ENCODE measurements at regions of chr7 and their contacts with region 1.

Region 1: GRCh38 chr7:28037220-28038010 is 143.2 kb downstream of the JAZF1 start:
- DNase-seq: no peak
- H3K4me3 Mint-ChIP-seq: peak overlapping the region; percentile 34
- H3K27ac Mint-ChIP-seq: peak overlapping the region; percentile 70
- H3K4me1 Mint-ChIP-seq: peaks cover 31% of the 10 kb centered on the region
- H3K27me3 Mint-ChIP-seq: peaks cover 16% of the 10 kb centered on the region

Region 2: DNA sequence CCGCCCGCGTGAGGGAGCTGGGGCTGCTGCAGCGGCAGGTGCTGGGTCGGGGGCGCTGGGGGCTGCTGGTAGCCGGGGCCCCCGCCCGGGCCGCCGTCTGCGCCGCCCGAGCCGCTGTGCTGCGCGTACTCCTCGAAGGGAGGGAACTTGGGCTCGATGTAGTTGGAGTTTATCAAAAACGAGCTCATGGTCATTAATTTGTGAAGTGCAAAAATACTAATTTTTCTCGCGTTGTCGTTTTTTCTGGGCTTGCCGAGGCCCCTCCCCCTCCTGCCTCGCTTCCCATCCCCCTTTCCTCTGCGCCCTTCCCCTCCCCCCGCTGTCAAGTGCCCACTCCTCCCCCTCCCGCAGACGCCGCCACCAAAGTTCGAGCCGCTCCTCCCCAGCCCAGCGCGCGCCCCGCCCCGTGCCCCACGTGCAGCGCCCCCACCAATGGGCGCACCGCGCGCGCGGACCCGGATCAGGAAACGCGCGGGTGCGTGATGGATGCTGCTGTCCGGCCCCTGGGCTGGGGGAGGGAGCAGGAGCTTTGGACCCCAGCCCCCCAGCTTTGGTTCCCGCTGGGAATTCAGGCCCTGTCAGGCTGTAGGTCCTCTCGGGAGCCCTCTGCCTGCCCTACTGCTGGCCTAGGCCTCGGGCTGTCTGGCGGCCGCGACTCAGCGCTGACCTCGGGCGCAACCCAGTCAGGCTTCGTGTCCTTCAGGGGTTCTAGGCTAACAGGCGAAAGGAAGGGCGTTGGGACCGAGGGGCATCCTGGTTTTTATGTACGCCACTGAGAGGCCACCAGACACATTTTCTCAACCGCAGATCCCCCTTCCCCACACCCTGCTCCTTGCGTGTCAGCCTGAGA is 906.6 kb before region 1 on chr7 and contains the start of gene HOXA4:
- intact Hi-C with region 1: loop called (anchors 1 kb)
- DNase-seq: peak; percentile 67
- H3K4me3 Mint-ChIP-seq: peak within 1 kb of the TSS; percentile 51
- H3K27ac Mint-ChIP-seq: no peak within 1 kb of the TSS
- H3K4me1 Mint-ChIP-seq: peaks cover 27% of the 10 kb centered on the region
- H3K27me3 Mint-ChIP-seq: peaks cover 51% of the 10 kb centered on the region
- total RNA-seq, gene HOXA4: not detected in 2 replicates

Region 3: DNA sequence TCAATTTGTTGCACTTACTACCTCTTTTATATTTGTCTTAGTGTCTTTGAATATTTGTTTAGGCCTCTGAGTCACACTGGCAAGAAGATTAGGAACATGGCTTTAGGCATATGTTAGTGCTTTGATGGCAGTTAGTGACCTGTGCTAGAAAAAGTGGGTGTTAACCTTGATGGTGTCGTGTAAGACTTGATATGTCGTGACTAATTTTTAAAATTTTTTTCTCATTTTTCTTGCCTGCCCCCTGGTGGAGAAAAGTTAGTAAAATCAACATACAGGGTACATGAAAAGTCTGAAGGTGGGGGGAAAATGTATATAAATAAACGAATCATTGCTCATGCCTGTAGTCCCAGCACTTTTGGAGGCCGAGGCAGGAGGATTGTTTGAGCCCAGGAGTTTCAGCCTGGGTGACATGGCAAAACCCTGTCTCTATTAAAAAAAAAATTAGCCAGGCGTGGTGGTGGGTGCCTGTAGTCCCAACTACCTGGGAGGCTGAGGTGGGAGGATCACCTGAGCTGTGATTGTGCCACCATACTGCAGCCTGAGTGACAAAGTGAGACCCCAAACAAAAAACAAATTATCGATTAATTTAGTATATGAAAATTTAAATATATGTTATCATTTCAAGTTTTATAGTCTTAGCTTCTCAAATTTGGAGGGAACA is 252.9 kb before region 1 on chr7:
- intact Hi-C with region 1: loop called (anchors 1 kb)
- DNase-seq: peak; percentile 2
- H3K4me3 Mint-ChIP-seq: no peak overlapping the region
- H3K27ac Mint-ChIP-seq: peak overlapping the region; percentile 20
- H3K4me1 Mint-ChIP-seq: peaks cover 24% of the 10 kb centered on the region
- H3K27me3 Mint-ChIP-seq: no peaks in the 10 kb centered on the region

Region 4: DNA sequence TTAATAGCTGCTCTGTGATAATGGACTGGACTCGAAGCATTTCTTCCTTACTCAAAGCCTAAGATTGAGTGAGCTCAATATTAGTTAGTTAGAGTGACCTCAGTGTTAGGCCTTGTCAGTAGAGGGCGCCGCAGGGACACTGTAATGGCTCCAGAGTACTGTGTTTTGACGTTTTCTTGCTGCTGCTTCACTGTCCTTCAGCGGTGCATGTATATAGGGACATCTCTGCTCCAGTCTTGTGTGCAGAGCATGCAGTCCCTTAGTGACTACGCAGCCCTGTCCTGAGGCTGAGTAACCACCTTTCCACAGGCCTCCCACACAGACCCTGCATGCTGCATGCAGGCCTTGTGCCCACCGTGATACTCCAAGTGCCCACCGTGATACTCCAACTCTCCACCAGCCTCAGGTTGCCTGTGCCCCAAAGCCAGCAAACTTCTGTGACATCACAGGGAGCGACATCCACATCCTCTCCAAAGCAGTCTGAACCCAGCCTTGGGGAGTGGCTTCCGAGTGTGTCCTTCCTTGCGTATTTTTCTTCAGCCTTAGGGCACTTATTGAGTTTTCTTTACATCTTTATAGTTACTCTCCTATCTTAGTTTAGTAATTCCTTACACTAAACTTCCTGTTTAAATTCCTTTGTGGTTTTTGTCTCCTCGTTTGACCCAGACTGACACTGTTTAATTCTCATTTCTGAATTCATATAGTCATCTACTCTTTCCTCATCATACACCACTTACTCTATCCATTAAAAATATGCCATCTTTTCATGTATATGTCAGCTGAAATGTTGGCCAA is 25.0 kb after region 1 on chr7:
- intact Hi-C with region 1: loop called (anchors 2 kb)
- DNase-seq: no peak
- H3K4me3 Mint-ChIP-seq: no peak overlapping the region
- H3K27ac Mint-ChIP-seq: no peak overlapping the region
- H3K4me1 Mint-ChIP-seq: no peaks in the 10 kb centered on the region
- H3K27me3 Mint-ChIP-seq: peaks cover 12% of the 10 kb centered on the region

Region 5: GRCh38 chr7:28179120-28180030 is 142.0 kb after region 1 on chr7:
- intact Hi-C with region 1: loop called (anchors 2 kb)
- DNase-seq: peak; percentile 57
- H3K4me3 Mint-ChIP-seq: peak overlapping the region; percentile 82
- H3K27ac Mint-ChIP-seq: peak overlapping the region; percentile 62
- H3K4me1 Mint-ChIP-seq: peaks cover 23% of the 10 kb centered on the region
- H3K27me3 Mint-ChIP-seq: peaks cover 31% of the 10 kb centered on the region

Region 6: GRCh38 chr7:28329661-28330363 is 292.4 kb after region 1 on chr7:
- intact Hi-C with region 1: loop called (anchors 2 kb)
- DNase-seq: peak; percentile 6
- H3K4me3 Mint-ChIP-seq: peak overlapping the region; percentile 48
- H3K27ac Mint-ChIP-seq: no peak overlapping the region
- H3K4me1 Mint-ChIP-seq: peaks cover 28% of the 10 kb centered on the region
- H3K27me3 Mint-ChIP-seq: no peaks in the 10 kb centered on the region

Measured in activated T-helper 1 cell treated with anti-CD3 and anti-CD28 coated beads, Interleukin-12 subunit alpha, Interleukin-12 subunit beta, Interleukin-2, Interleukin-4 antibody, amounts not matched to agents 30 ng/mL and 10 ng/mL and 1 ng/mL, durations not matched to agents 14 hours and 24 hours and 36 hours (primary cell).